A549 (cell line): ENCODE measurements at regions of chr6 and their contacts with region 1.

Region 1: DNA sequence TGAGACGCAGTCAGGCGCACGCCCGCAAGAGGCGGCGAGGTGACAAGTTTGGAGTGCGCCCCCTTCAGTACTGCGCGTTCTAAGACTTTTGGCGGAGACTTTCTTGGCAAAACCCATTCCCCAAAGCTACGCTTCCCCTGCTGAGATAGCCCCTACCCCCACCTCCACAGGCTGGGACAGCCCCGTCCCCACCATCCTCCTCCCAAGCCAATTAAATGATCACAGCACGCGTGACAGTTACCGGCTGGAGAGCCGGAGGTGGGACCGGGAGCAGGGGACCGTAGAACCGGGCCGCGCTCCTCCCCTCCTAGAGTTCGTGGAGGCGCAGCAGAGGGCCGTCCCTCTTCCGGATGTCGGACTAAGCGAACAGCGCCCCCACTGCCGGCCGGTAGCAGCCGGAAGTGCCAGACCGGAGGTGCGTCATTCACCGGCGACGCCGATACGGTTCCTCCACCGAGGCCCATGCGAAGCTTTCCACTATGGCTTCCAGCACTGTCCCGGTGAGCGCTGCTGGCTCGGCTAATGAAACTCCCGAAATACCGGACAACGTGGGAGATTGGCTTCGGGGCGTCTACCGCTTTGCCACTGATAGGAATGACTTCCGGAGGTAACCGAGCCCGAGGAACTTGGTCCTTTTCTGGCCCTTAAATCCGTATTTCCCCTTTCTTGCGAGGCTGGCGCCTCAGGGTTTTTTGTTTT is at the start of gene TOMM6:
- DNase-seq: peak; percentile 70 to 94
- ATAC-seq: peak; percentile 87 to 90
- H3K4me3 ChIP-seq: peak within 1 kb of the TSS; percentile 65
- H3K27ac ChIP-seq: peak within 1 kb of the TSS; percentile 85 to 97
- H3K4me1 ChIP-seq: peaks cover 14% of the 10 kb centered on the region
- CTCF ChIP-seq: peak; percentile 74
- EP300 ChIP-seq: no peak
- POLR2A ChIP-seq: peak; percentile 63
- RAD21 ChIP-seq: no peak
- polyA plus RNA-seq, gene TOMM6: 217 and 262 TPM in 2 replicates

Region 2: GRCh38 chr6:41735427-41736356 is 51.7 kb before region 1 on chr6 and contains the start of gene TFEB:
- CTCF ChIA-PET with region 1: interaction called, 10 read pairs
- POLR2A ChIA-PET with region 1: interaction called, 5 read pairs
- DNase-seq: peak; percentile 77 to 86
- ATAC-seq: peak; percentile 63 to 72
- H3K4me3 ChIP-seq: peak within 1 kb of the TSS; percentile 90
- H3K27ac ChIP-seq: peak within 1 kb of the TSS; percentile 95 to 99
- H3K4me1 ChIP-seq: peaks cover 32% of the 10 kb centered on the region
- CTCF ChIP-seq: peak; percentile 81
- EP300 ChIP-seq: no peak
- POLR2A ChIP-seq: no peak
- RAD21 ChIP-seq: peak; percentile 37 to 59
- polyA plus RNA-seq, gene TFEB: 2.9 and 3.1 TPM in 2 replicates

Region 3: GRCh38 chr6:41801380-41801779 is 14.0 kb after region 1 on chr6:
- CTCF ChIA-PET with region 1: interaction called, 33 read pairs
- POLR2A ChIA-PET with region 1: interaction called, 3 read pairs
- DNase-seq: peak in 1 of 2 experiments; percentile 31
- ATAC-seq: peak; percentile 73 to 77; a peak in 4 of 6 replicates
- H3K4me3 ChIP-seq: no peak overlapping the region
- H3K27ac ChIP-seq: no peak overlapping the region
- H3K4me1 ChIP-seq: 0 out of 3 replicates have a peak, but pooled peaks cover 3% of the 10 kb centered on the region
- CTCF ChIP-seq: peak; percentile 50
- EP300 ChIP-seq: no peak
- POLR2A ChIP-seq: no peak
- RAD21 ChIP-seq: peak; percentile 64 to 69

Region 4: GRCh38 chr6:41936073-41936837 is 148.9 kb after region 1 on chr6:
- CTCF ChIA-PET with region 1: interaction called, 17 read pairs
- POLR2A ChIA-PET with region 1: interaction called, 8 read pairs
- DNase-seq: peak; percentile 72 to 84
- ATAC-seq: peak; percentile 69 to 73
- H3K4me3 ChIP-seq: 0 out of 3 replicates have a peak overlapping the region, but pooled peaks have one; percentile 14
- H3K27ac ChIP-seq: peak overlapping the region; percentile 93 to 99
- H3K4me1 ChIP-seq: peaks cover 61% of the 10 kb centered on the region
- CTCF ChIP-seq: peak; percentile 47
- EP300 ChIP-seq: no peak
- POLR2A ChIP-seq: no peak
- RAD21 ChIP-seq: peak; percentile 50 to 60

Region 5: GRCh38 chr6:42043787-42044475 is 256.6 kb after region 1 on chr6:
- CTCF ChIA-PET with region 1: interaction called, 111 read pairs
- POLR2A ChIA-PET with region 1: interaction called, 6 read pairs
- DNase-seq: peak; percentile 81 to 82
- ATAC-seq: peak; percentile 87 to 92
- H3K4me3 ChIP-seq: no peak overlapping the region
- H3K27ac ChIP-seq: peak overlapping the region; percentile 88 to 96
- H3K4me1 ChIP-seq: peaks cover 66% of the 10 kb centered on the region
- CTCF ChIP-seq: peak; percentile 88
- EP300 ChIP-seq: no peak
- POLR2A ChIP-seq: no peak
- RAD21 ChIP-seq: peak; percentile 98